Naive thymus-derived CD4-positive, alpha-beta T cell (primary cell): ENCODE measurements at regions of chr3 and their contacts with region 1.

Region 1: GRCh38 chr3:18740631-18741583 is 315.8 kb upstream of the SATB1 start:
- DNase-seq: peak in 8 of 9 donors; percentile 46 to 83 (median 70)
- ATAC-seq: peak; percentile 74
- H3K4me3 ChIP-seq: peak overlapping the region; percentile 28
- H3K4me3 Mint-ChIP-seq: peak overlapping the region; percentile 74 to 89 (median 84)
- H3K27ac ChIP-seq: peak overlapping the region; percentile 80
- H3K27ac Mint-ChIP-seq: peak overlapping the region; percentile 89 to 99 (median 96)
- H3K4me1 ChIP-seq: peaks cover 65 to 71% of the 10 kb centered on the region in 2 donors
- H3K4me1 Mint-ChIP-seq: peaks cover 52 to 97% (median 92%) of the 10 kb centered on the region in 7 donors
- H3K27me3 ChIP-seq: no peaks in the 10 kb centered on the region
- H3K27me3 Mint-ChIP-seq: no peaks in the 10 kb centered on the region

Region 2: DNA sequence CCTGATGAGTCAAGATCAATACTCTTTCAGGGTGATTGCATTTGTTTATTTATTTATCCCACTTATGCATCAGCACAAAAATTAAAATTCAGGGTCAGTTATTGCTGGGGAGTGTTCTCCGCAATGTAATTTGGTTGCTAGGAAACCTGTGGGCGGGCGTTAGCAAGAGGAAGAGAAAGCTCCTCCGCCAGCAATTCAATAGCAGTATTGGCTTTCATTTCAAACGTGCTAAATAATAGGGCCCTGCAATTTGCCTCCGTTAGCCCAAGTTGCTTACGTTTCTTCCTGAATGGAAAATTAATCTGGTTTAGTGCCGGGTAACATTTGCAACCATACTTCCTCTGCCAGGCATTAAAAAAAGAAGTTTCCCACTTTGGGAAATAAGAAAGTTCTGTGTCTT is 1891.7 kb before region 1 on chr3:
- CTCF ChIA-PET with region 1: no interaction called
- POLR2A ChIA-PET with region 1: no interaction called
- intact Hi-C with region 1: loop called in 1 of 2 experiments (anchors 10 kb)
- DNase-seq: peak; percentile 20 to 74 (median 59)
- ATAC-seq: peak; percentile 89
- H3K4me3 ChIP-seq: peak overlapping the region; percentile 14
- H3K4me3 Mint-ChIP-seq: peak overlapping the region; percentile 43 to 85 (median 79)
- H3K27ac ChIP-seq: peak overlapping the region; percentile 54
- H3K27ac Mint-ChIP-seq: peak overlapping the region; percentile 69 to 92 (median 83)
- H3K4me1 ChIP-seq: peaks cover 24 to 43% of the 10 kb centered on the region in 2 donors
- H3K4me1 Mint-ChIP-seq: peaks cover 29 to 61% (median 56%) of the 10 kb centered on the region in 7 donors
- H3K27me3 ChIP-seq: no peaks in the 10 kb centered on the region
- H3K27me3 Mint-ChIP-seq: peaks cover 0 to 8% (median 0%) of the 10 kb centered on the region in 5 donors

Region 3: GRCh38 chr3:16978234-16978920 is 1762.5 kb before region 1 on chr3:
- CTCF ChIA-PET with region 1: no interaction called
- POLR2A ChIA-PET with region 1: no interaction called
- intact Hi-C with region 1: no loop called
- DNase-seq: no peak
- ATAC-seq: no peak
- H3K4me3 ChIP-seq: no peak overlapping the region
- H3K4me3 Mint-ChIP-seq: no peak overlapping the region
- H3K27ac ChIP-seq: no peak overlapping the region
- H3K27ac Mint-ChIP-seq: peak overlapping the region in 6 of 9 donors; percentile 12 to 82 (median 60)
- H3K4me1 ChIP-seq: peaks cover 6 to 8% of the 10 kb centered on the region in 2 donors
- H3K4me1 Mint-ChIP-seq: peaks cover 24 to 80% (median 70%) of the 10 kb centered on the region in 7 donors
- H3K27me3 ChIP-seq: no peaks in the 10 kb centered on the region
- H3K27me3 Mint-ChIP-seq: no peaks in the 10 kb centered on the region

Region 4: DNA sequence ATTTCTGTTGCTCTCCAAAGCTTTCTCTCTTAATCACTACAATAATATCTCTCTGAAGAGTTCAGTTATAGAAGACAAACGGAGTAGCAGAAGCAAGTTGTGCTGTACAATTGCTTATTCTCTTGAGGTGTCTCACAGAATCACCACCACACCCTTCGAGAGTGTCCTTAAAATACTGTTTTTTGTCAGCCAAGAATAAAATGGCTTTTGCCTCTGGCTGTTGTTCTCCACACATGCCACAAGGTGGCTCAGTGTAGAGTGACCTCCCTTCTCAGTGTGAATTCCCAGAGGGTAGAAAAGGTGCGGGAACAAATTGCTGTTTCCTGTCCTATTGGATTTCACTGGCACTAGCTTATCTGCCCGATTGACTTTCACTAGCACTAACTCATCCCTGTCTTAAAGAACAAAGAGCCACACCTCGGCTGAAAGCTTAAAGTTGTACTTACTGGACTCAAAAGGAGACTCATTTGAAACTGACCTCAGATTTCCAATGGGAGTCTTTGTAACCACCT is 181.5 kb before region 1 on chr3:
- CTCF ChIA-PET with region 1: interaction called, 4 read pairs
- POLR2A ChIA-PET with region 1: interaction called, 5 read pairs
- intact Hi-C with region 1: loop called in 1 of 2 experiments (anchors 1 kb)
- DNase-seq: peak; percentile 9 to 57 (median 32)
- ATAC-seq: peak; percentile 77
- H3K4me3 ChIP-seq: no peak overlapping the region
- H3K4me3 Mint-ChIP-seq: peak overlapping the region; percentile 40 to 79 (median 67)
- H3K27ac ChIP-seq: no peak overlapping the region
- H3K27ac Mint-ChIP-seq: peak overlapping the region; percentile 63 to 89 (median 79)
- H3K4me1 ChIP-seq: peaks cover 13 to 19% of the 10 kb centered on the region in 2 donors
- H3K4me1 Mint-ChIP-seq: peaks cover 22 to 67% (median 61%) of the 10 kb centered on the region in 7 donors
- H3K27me3 ChIP-seq: no peaks in the 10 kb centered on the region
- H3K27me3 Mint-ChIP-seq: no peaks in the 10 kb centered on the region

Region 5: GRCh38 chr3:18679238-18679637 is 61.7 kb before region 1 on chr3:
- CTCF ChIA-PET with region 1: no interaction called
- POLR2A ChIA-PET with region 1: interaction called, 3 read pairs
- intact Hi-C with region 1: loop called (anchors 1 to 2 kb)
- DNase-seq: peak in 8 of 9 donors; percentile 26 to 65 (median 42)
- ATAC-seq: peak; percentile 91
- H3K4me3 ChIP-seq: no peak overlapping the region
- H3K4me3 Mint-ChIP-seq: peak overlapping the region; percentile 30 to 79 (median 72)
- H3K27ac ChIP-seq: peak overlapping the region; percentile 35
- H3K27ac Mint-ChIP-seq: peak overlapping the region; percentile 53 to 90 (median 80)
- H3K4me1 ChIP-seq: peaks cover 34 to 46% of the 10 kb centered on the region in 2 donors
- H3K4me1 Mint-ChIP-seq: peaks cover 37 to 83% (median 75%) of the 10 kb centered on the region in 7 donors
- H3K27me3 ChIP-seq: no peaks in the 10 kb centered on the region
- H3K27me3 Mint-ChIP-seq: no peaks in the 10 kb centered on the region

Region 6: GRCh38 chr3:18725668-18726407 is 15.1 kb before region 1 on chr3:
- CTCF ChIA-PET with region 1: interaction called, 3 read pairs
- POLR2A ChIA-PET with region 1: interaction called, 95 read pairs
- intact Hi-C with region 1: loop called (anchors 1 kb)
- DNase-seq: peak in 8 of 9 donors; percentile 50 to 76 (median 68)
- ATAC-seq: peak; percentile 80
- H3K4me3 ChIP-seq: peak overlapping the region; percentile 42
- H3K4me3 Mint-ChIP-seq: peak overlapping the region; percentile 57 to 88 (median 75)
- H3K27ac ChIP-seq: peak overlapping the region; percentile 74
- H3K27ac Mint-ChIP-seq: peak overlapping the region; percentile 95 to 100 (median 98)
- H3K4me1 ChIP-seq: peaks cover 54 to 61% of the 10 kb centered on the region in 2 donors
- H3K4me1 Mint-ChIP-seq: peaks cover 50 to 88% (median 80%) of the 10 kb centered on the region in 7 donors
- H3K27me3 ChIP-seq: no peaks in the 10 kb centered on the region
- H3K27me3 Mint-ChIP-seq: no peaks in the 10 kb centered on the region

Region 7: DNA sequence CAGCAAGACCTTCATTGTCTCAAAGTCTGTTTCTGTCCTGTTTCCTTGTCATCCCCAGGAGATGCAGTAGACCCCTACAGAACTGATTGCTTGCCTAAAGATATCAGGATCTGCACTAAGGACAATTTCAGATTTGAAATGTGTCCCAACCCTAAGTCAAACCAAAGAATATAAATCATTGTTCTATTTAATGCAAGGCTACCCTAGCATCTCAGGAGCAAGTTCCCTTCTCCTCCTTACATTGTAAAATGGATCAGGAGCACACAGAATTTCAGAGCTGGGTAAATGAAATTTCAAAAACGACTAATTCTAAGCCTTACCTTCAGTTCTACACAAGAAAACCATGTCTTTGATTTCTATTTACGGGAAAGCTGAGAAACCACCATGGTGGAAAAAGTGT is 46.5 kb after region 1 on chr3:
- CTCF ChIA-PET with region 1: no interaction called
- POLR2A ChIA-PET with region 1: no interaction called
- intact Hi-C with region 1: loop called in 1 of 2 experiments (anchors 5 kb)
- DNase-seq: peak in 2 of 9 donors; percentile 16 to 31
- ATAC-seq: no peak
- H3K4me3 ChIP-seq: no peak overlapping the region
- H3K4me3 Mint-ChIP-seq: no peak overlapping the region
- H3K27ac ChIP-seq: no peak overlapping the region
- H3K27ac Mint-ChIP-seq: peak overlapping the region in 2 of 9 donors; percentile 44 to 48
- H3K4me1 ChIP-seq: no peaks in the 10 kb centered on the region
- H3K4me1 Mint-ChIP-seq: peaks cover under 1 to 34% (median 10%) of the 10 kb centered on the region in 7 donors
- H3K27me3 ChIP-seq: no peaks in the 10 kb centered on the region
- H3K27me3 Mint-ChIP-seq: no peaks in the 10 kb centered on the region